Activated CD8-positive, alpha-beta T cell treated with anti-CD3 and anti-CD28 coated beads for 36 hours (primary cell): ENCODE measurements at regions of chr12 and their contacts with region 1.

Region 1: GRCh38 chr12:103930034-103930786 is at the start of gene HSP90B1:
- DNase-seq: peak; percentile 100
- ATAC-seq: peak; percentile 63
- H3K4me3 Mint-ChIP-seq: peak within 1 kb of the TSS; percentile 87
- H3K27ac Mint-ChIP-seq: peak within 1 kb of the TSS; percentile 99
- H3K4me1 Mint-ChIP-seq: peaks cover 49% of the 10 kb centered on the region
- H3K27me3 Mint-ChIP-seq: peaks cover 3% of the 10 kb centered on the region
- CTCF ChIP-seq: no peak
- total RNA-seq, gene HSP90B1: 412 to 418 TPM

Region 2: GRCh38 chr12:103779428-103780092 is 150.7 kb before region 1 on chr12:
- CTCF ChIA-PET with region 1: no interaction called
- POLR2A ChIA-PET with region 1: no interaction called
- intact Hi-C with region 1: no loop called
- DNase-seq: no peak
- ATAC-seq: no peak
- H3K4me3 Mint-ChIP-seq: no peak overlapping the region
- H3K27ac Mint-ChIP-seq: no peak overlapping the region
- H3K4me1 Mint-ChIP-seq: no peaks in the 10 kb centered on the region
- H3K27me3 Mint-ChIP-seq: no peaks in the 10 kb centered on the region
- CTCF ChIP-seq: no peak

Region 3: GRCh38 chr12:103901518-103902173 is 28.6 kb before region 1 on chr12:
- CTCF ChIA-PET with region 1: interaction called, 14 read pairs
- POLR2A ChIA-PET with region 1: interaction called, 90 read pairs
- intact Hi-C with region 1: loop called (anchors 2 kb)
- DNase-seq: peak; percentile 52
- ATAC-seq: peak; percentile 54
- H3K4me3 Mint-ChIP-seq: peak overlapping the region; percentile 58
- H3K27ac Mint-ChIP-seq: peak overlapping the region; percentile 82
- H3K4me1 Mint-ChIP-seq: peaks cover 65% of the 10 kb centered on the region
- H3K27me3 Mint-ChIP-seq: no peaks in the 10 kb centered on the region
- CTCF ChIP-seq: no peak

Region 4: GRCh38 chr12:103915306-103915705 is 14.9 kb before region 1 on chr12:
- CTCF ChIA-PET with region 1: interaction called, 4 read pairs
- POLR2A ChIA-PET with region 1: interaction called, 19 read pairs
- intact Hi-C with region 1: no loop called
- DNase-seq: no peak
- ATAC-seq: no peak
- H3K4me3 Mint-ChIP-seq: no peak overlapping the region
- H3K27ac Mint-ChIP-seq: no peak overlapping the region
- H3K4me1 Mint-ChIP-seq: no peaks in the 10 kb centered on the region
- H3K27me3 Mint-ChIP-seq: no peaks in the 10 kb centered on the region
- CTCF ChIP-seq: no peak

Region 5: DNA sequence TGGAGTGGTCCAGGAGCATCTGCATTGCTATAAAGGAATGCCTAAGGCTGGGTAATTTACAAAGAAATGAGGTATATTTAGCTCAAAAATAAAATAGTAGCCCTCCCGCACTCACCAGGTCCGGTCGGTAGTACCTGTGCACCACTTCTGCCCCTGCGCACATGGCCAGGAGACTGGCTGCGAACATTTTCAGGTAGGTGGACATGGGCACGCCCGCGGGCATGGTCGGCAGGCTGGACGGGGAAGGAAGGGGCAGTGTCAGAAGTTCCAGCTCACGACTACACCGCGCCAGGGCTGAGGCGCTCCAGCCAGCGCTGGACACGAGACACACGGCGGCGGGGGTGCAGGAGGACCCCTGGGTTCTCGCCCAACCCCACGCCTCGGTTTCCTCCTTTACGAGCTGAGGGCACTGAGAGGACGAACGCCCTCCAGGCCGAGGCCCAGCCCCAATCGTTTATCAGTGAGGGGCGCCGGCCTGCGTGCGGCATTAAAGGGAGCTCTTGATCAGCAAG is 26.4 kb after region 1 on chr12:
- CTCF ChIA-PET with region 1: interaction called, 7 read pairs
- POLR2A ChIA-PET with region 1: interaction called, 56 read pairs
- intact Hi-C with region 1: no loop called
- DNase-seq: peak; percentile 27
- ATAC-seq: no peak
- H3K4me3 Mint-ChIP-seq: peak overlapping the region; percentile 93
- H3K27ac Mint-ChIP-seq: peak overlapping the region; percentile 95
- H3K4me1 Mint-ChIP-seq: peaks cover 41% of the 10 kb centered on the region
- H3K27me3 Mint-ChIP-seq: no peaks in the 10 kb centered on the region
- CTCF ChIP-seq: no peak